ENCODE measurements at regions of chr1 and their contacts with region 1.

Region 1: GRCh38 chr1:9145021-9145668 is 16.2 kb upstream of the GPR157 start:
- DNase-seq: no peak
- ATAC-seq: 0 out of 2 replicates have a peak, but pooled peaks have one; percentile 51
- H3K4me3 ChIP-seq: no peak overlapping the region
- H3K27ac ChIP-seq: no peak overlapping the region
- H3K4me1 ChIP-seq: no peaks in the 10 kb centered on the region
- H3K27me3 ChIP-seq: no peaks in the 10 kb centered on the region
- CTCF ChIP-seq: no peak

Region 2: DNA sequence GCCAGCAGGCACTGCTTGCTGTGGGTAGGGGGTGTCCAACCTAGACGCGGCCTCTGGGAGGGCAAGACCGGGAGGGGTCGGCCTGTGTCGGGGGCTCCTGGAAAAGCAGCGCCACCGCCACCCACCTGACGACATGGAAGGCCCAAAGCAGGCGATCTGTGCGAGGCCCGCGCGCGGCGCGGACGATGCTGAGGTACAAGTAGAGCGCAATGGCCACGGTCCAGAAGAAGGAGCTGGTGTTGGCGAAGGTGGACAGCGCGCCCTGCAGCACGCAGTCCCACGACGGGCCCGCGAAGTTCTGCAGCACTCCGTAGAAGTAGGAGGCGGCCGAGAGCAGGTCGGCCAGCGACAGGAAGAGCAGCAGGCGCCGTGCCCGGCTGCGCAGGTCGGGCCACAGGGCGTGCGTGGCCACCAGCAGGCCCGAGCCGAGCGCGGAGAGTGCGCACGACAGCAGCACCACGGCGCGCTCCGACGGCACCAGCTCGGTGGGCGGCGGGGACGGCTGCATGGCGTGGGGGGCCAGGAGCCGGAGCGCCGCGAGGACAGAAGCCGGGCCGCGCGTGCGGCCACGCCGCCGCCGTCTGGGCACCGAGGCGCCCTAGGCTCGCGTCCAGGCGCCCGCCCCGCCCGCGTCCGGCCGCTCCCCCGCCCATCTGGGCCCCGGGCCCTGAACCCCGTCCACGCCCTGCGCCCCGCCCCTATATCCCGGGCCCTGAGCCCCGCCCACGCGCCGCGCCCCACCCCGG is 16.5 kb before region 1 on chr1 and contains the start of gene GPR157:
- CTCF ChIA-PET with region 1: interaction called, 6 read pairs
- POLR2A ChIA-PET with region 1: interaction called, 11 read pairs
- in situ Hi-C with region 1: no loop called
- intact Hi-C with region 1: no loop called
- DNase-seq: no peak
- ATAC-seq: peak; percentile 89
- H3K4me3 ChIP-seq: peak within 1 kb of the TSS; percentile 69 to 85
- H3K27ac ChIP-seq: peak within 1 kb of the TSS; percentile 81
- H3K4me1 ChIP-seq: peaks cover 10% of the 10 kb centered on the region
- H3K27me3 ChIP-seq: no peaks in the 10 kb centered on the region
- CTCF ChIP-seq: no peak
- total RNA-seq, gene GPR157: 19.8 TPM

Region 3: GRCh38 chr1:9196129-9197040 is 51.2 kb after region 1 on chr1:
- CTCF ChIA-PET with region 1: interaction called, 28 read pairs
- POLR2A ChIA-PET with region 1: no interaction called
- in situ Hi-C with region 1: no loop called
- intact Hi-C with region 1: loop called (anchors 5 kb)
- DNase-seq: no peak
- ATAC-seq: peak; percentile 78
- H3K4me3 ChIP-seq: peak overlapping the region in 1 of 2 experiments; percentile 15; a peak in 1 of 4 replicates
- H3K27ac ChIP-seq: no peak overlapping the region; the same call in 1 of the 2 replicates
- H3K4me1 ChIP-seq: peaks cover 16% of the 10 kb centered on the region
- H3K27me3 ChIP-seq: no peaks in the 10 kb centered on the region
- CTCF ChIP-seq: peak; percentile 93

Region 4: DNA sequence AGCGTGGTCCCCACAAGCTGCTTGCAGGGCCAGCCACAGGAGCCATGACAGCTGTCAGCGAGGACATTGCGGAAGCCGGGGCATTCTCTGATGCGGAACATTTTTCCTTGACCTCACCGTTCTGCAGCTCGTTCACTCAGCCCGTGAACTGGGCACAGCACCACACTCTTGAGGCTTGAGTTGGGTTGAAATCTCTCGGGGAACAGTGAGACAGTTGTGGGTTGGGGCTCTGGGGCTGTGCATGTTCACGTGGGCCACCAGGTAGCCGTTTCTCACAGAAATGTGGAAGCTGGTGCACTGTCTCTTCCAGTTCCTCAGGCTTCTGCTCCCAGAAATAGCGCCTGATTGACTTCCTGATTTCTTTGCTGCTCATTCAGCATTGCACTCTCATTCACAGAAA is 217.3 kb after region 1 on chr1:
- CTCF ChIA-PET with region 1: no interaction called
- POLR2A ChIA-PET with region 1: no interaction called
- in situ Hi-C with region 1: no loop called
- intact Hi-C with region 1: no loop called
- DNase-seq: no peak
- ATAC-seq: no peak
- H3K4me3 ChIP-seq: no peak overlapping the region
- H3K27ac ChIP-seq: no peak overlapping the region
- H3K4me1 ChIP-seq: peaks cover 21% of the 10 kb centered on the region
- H3K27me3 ChIP-seq: no peaks in the 10 kb centered on the region
- CTCF ChIP-seq: no peak

Measured in Panc1 (cell line).